ENCODE measurements at regions of chr16 and their contacts with region 1.

Region 1: DNA sequence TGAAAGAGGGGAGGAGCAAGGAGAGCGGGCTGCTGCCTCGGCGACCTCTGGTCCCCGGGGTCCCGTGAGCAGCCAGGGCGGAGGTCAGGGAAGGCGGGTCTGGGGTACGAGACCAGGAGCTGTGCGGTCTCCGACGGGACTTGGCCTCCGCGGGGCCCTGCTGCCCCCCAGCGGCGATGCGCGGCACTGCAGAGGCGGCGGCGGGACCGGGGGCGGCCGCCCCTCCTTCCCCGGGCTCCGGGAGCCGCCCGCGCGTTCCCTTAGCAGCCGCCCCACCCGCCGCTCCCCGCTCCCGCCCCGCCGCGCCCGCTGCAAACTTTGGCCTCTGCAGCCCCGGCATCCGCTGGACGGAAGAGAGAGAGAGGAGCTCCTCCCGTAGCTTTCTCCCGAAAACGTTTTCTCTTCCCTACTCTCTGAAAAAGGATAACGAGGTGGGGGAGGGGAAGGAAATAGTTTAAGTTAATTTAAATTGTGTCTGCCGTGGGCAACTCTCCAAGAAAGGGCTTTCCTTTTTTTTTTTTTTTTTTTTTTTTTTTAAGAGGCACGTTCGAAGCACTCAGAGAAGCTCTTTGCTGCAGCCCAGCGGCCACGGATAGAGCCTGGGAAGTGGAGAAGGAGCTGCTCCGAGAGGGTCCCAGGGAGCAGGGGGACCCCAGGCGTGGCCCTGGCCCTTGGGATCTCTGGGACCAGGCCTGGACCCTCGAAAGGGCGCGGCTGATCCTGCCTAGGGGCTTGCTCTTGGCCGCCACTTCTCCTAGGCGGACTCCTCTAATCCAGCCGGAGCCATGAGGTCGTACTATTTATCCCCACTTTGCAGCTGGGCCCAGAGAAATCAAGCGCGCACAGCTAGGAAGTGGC is 43.2 kb downstream of the C16orf82 start:
- DNase-seq: peak; percentile 85
- H3K4me3 ChIP-seq: peak overlapping the region; percentile 76
- H3K27ac ChIP-seq: no peak overlapping the region
- H3K4me1 ChIP-seq: no peaks in the 10 kb centered on the region
- H3K27me3 ChIP-seq: no peaks in the 10 kb centered on the region

Region 2: GRCh38 chr16:25257504-25257955 is 1852.4 kb before region 1 on chr16 and contains the start of gene ZKSCAN2:
- in situ Hi-C with region 1: loop called (anchors 25 kb)
- DNase-seq: peak; percentile 97
- H3K4me3 ChIP-seq: peak within 1 kb of the TSS; percentile 83
- H3K27ac ChIP-seq: peak within 1 kb of the TSS; percentile 84
- H3K4me1 ChIP-seq: peaks cover 22% of the 10 kb centered on the region
- H3K27me3 ChIP-seq: no peaks in the 10 kb centered on the region
- total RNA-seq, gene ZKSCAN2: 1.4 and 2.3 TPM in 2 replicates

Region 3: DNA sequence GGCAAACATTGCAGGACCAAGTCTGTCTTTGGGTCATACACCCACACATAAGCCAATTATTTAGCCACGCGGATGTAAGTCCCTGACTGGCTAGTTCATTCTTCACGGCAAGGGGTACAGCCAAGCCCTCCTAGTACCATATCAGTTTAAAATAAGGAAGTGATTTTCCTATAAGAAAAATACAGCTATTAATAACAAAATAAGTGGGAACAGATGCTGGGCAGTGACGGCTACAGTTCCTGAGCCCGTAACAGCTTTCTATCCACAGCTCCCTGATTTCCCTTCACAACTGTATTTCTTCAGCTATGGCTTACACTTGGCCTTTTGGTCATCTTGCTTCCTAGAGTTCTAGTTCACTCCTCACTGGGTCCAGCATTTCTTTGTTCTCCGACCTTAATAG is 585.6 kb before region 1 on chr16:
- in situ Hi-C with region 1: loop called (anchors 25 kb)
- DNase-seq: no peak
- H3K4me3 ChIP-seq: no peak overlapping the region
- H3K27ac ChIP-seq: no peak overlapping the region
- H3K4me1 ChIP-seq: no peaks in the 10 kb centered on the region
- H3K27me3 ChIP-seq: no peaks in the 10 kb centered on the region

Region 4: DNA sequence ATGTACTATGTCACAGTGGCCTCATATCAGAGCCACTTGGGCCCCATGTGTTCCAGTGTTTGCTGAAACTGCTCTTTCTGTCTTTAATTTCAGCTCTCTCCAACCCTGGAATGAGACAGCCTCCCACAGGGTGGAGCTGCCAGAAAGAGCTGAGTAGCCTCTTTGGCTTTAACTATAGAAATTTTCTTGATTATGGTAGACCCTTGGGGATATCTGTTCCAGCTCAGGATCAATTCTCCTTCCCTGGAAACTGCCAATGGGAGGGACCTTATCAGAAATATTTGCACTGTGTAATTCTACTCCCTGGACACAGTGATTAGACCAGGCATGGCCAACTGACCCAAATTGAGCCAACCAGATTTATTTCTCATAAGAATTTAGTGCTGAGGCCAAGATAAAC is 54.5 kb after region 1 on chr16:
- in situ Hi-C with region 1: no loop called
- DNase-seq: no peak
- H3K4me3 ChIP-seq: no peak overlapping the region
- H3K27ac ChIP-seq: no peak overlapping the region
- H3K4me1 ChIP-seq: no peaks in the 10 kb centered on the region
- H3K27me3 ChIP-seq: no peaks in the 10 kb centered on the region